ENCODE measurements at regions of chr5 and their contacts with region 1.

Region 1: GRCh38 chr5:157130925-157131324 is 11.7 kb downstream of the MED7 start:
- DNase-seq: peak; percentile 66
- H3K4me3 ChIP-seq: no peak overlapping the region
- H3K27ac ChIP-seq: peak overlapping the region; percentile 40
- H3K4me1 ChIP-seq: peaks cover 50% of the 10 kb centered on the region
- CTCF ChIP-seq: no peak

Region 2: DNA sequence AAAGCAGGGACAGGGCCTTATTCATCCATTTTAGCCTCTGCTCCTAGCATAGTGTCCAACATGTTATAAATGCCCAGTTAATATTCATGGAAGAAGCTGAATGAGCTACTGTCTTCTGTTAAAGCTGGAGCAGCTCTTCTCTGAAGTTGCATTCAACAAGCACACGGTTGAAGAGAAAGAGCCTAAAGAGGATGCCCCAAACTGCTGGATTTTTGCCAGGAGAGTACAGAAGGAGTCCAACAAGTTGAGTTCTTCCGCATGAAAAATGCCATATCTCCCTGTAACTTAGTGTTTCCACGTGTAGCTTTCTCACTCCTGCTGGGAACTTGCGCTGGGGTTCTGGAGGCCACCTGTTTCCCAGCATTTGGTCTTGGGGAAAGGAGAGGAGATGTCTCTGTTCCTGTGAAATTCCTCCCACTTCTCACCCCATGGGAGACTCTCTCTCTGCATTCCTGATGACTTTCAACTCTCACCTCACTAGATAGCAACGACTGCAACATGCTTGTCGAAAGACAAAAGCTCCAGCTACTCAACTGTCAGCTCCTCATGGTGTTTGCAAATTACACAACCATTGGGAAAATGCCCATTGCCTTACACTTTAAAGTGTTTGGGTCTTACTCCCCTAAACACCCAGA is 1994.6 kb before region 1 on chr5:
- CTCF ChIA-PET with region 1: no interaction called
- POLR2A ChIA-PET with region 1: no interaction called
- intact Hi-C with region 1: loop called (anchors 5 kb)
- DNase-seq: no peak
- H3K4me3 ChIP-seq: no peak overlapping the region
- H3K27ac ChIP-seq: no peak overlapping the region
- H3K4me1 ChIP-seq: no peaks in the 10 kb centered on the region
- CTCF ChIP-seq: no peak

Region 3: GRCh38 chr5:155943516-155944407 is 1187.2 kb before region 1 on chr5:
- CTCF ChIA-PET with region 1: no interaction called
- POLR2A ChIA-PET with region 1: no interaction called
- intact Hi-C with region 1: loop called (anchors 2 kb)
- DNase-seq: peak; percentile 45
- H3K4me3 ChIP-seq: no peak overlapping the region
- H3K27ac ChIP-seq: no peak overlapping the region
- H3K4me1 ChIP-seq: peaks cover 4% of the 10 kb centered on the region
- CTCF ChIP-seq: peak; percentile 79

Region 4: GRCh38 chr5:156824800-156825199 is 306.1 kb before region 1 on chr5:
- CTCF ChIA-PET with region 1: no interaction called
- POLR2A ChIA-PET with region 1: interaction called, 6 read pairs
- intact Hi-C with region 1: loop called (anchors 5 kb)
- DNase-seq: peak; percentile 67
- H3K4me3 ChIP-seq: peak overlapping the region; percentile 48
- H3K27ac ChIP-seq: peak overlapping the region; percentile 77
- H3K4me1 ChIP-seq: peaks cover 89% of the 10 kb centered on the region
- CTCF ChIP-seq: peak; percentile 83

Region 5: GRCh38 chr5:157142317-157143126 is 11.6 kb after region 1 on chr5 and contains the start of gene MED7:
- CTCF ChIA-PET with region 1: interaction called, 14 read pairs
- POLR2A ChIA-PET with region 1: interaction called, 22 read pairs
- intact Hi-C with region 1: no loop called
- DNase-seq: peak; percentile 100
- H3K4me3 ChIP-seq: peak within 1 kb of the TSS; percentile 90
- H3K27ac ChIP-seq: peak within 1 kb of the TSS; percentile 68
- H3K4me1 ChIP-seq: peaks cover 14% of the 10 kb centered on the region
- CTCF ChIP-seq: no peak
- total RNA-seq, gene MED7: 19.0 and 23.3 TPM in 2 replicates

Measured in OCI-LY7 (cell line).